Calu3 (cell line): ENCODE measurements at regions of chr14 and their contacts with region 1.

Region 1: GRCh38 chr14:52414779-52415178 is 100.7 kb downstream of the PTGER2 start:
- DNase-seq: no peak
- H3K4me3 Mint-ChIP-seq: no peak overlapping the region
- H3K27ac Mint-ChIP-seq: no peak overlapping the region
- H3K4me1 Mint-ChIP-seq: no peaks in the 10 kb centered on the region
- H3K27me3 Mint-ChIP-seq: no peaks in the 10 kb centered on the region
- CTCF ChIP-seq: no peak

Region 2: DNA sequence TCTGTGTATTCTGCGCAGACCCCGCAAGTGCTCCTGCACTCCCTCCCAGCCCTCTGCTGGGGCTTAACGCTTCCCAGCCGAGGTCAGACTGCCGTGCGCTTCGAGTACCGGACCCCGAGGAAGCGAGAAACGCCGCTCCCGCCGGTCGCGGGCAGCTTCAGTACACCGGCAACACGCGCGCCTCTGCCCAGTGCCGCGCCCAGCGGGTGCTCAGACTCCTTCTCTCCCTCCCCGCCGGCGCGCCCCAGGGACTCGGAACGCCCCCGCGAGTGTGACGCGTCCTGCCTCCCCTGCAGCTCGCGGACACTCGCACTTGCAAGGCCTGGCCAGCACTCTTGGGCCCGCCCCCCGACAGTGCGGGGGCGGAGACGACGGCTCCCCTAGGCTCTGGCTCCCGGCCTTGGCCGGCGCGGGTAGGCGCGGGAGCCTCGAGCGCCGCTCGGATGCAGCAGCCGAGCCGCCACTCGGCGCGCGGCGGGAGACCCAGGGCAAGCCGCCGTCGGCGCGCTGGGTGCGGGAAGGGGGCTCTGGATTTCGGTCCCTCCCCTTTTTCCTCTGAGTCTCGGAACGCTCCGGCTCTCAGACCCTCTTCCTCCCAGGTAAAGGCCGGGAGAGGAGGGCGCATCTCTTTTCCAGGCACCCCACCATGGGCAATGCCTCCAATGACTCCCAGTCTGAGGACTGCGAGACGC is 100.7 kb before region 1 on chr14 and contains the start of gene PTGER2:
- CTCF ChIA-PET with region 1: no interaction called
- intact Hi-C with region 1: no loop called
- DNase-seq: peak; percentile 74
- H3K4me3 Mint-ChIP-seq: peak within 1 kb of the TSS; percentile 72
- H3K27ac Mint-ChIP-seq: no peak within 1 kb of the TSS
- H3K4me1 Mint-ChIP-seq: peaks cover 12% of the 10 kb centered on the region
- H3K27me3 Mint-ChIP-seq: peaks cover 74% of the 10 kb centered on the region
- CTCF ChIP-seq: no peak
- total RNA-seq, gene PTGER2: 0.29 TPM in 1 of 2 replicates, not detected in the other

Region 3: DNA sequence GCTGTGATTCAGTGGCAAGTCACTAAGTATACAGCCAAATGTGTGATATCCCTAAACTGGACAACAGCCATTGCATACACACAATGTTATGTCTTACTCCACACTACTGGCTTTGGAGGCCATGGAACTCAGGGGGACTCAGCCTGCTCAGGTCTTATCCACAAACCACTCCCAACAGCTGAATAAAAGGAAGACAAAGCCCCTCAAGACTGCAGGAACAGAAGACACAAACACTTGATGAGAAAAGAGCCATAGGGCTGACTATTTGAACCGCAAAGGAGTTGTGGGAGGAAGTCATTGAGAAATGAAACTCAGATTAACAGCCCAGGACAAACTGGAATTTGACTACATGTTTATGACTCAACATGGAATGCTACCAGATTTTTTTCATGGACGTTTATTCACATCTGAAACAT is 59.8 kb before region 1 on chr14:
- CTCF ChIA-PET with region 1: no interaction called
- intact Hi-C with region 1: no loop called
- DNase-seq: no peak
- H3K4me3 Mint-ChIP-seq: peak overlapping the region; percentile 7
- H3K27ac Mint-ChIP-seq: peak overlapping the region; percentile 16
- H3K4me1 Mint-ChIP-seq: peaks cover 30% of the 10 kb centered on the region
- H3K27me3 Mint-ChIP-seq: no peaks in the 10 kb centered on the region
- CTCF ChIP-seq: no peak

Region 4: GRCh38 chr14:52380294-52380693 is 34.5 kb before region 1 on chr14:
- CTCF ChIA-PET with region 1: no interaction called
- intact Hi-C with region 1: no loop called
- DNase-seq: no peak
- H3K4me3 Mint-ChIP-seq: no peak overlapping the region
- H3K27ac Mint-ChIP-seq: no peak overlapping the region
- H3K4me1 Mint-ChIP-seq: no peaks in the 10 kb centered on the region
- H3K27me3 Mint-ChIP-seq: peaks cover 15% of the 10 kb centered on the region
- CTCF ChIP-seq: no peak

Region 5: DNA sequence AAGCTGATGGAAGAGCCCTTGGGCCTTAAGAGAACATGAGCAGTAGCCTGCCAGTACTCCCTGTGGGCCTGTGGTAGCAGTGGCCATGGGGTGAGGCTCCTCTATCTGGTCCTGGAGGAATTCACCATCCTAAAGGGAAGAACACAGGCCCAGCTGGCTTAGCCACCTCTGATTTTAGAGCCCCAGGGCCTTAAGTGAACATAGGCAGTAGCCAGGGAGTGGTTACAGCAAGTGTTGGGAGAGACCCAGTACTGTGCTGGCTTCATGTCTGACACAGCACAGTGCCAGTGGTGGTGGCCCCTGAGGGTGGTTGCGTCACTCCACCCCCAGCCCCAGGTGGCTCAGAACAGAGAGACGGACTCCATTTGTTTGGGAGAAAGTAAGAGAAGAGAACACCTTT is 32.4 kb after region 1 on chr14:
- CTCF ChIA-PET with region 1: interaction called, 10 read pairs
- intact Hi-C with region 1: no loop called
- DNase-seq: no peak
- H3K4me3 Mint-ChIP-seq: no peak overlapping the region
- H3K27ac Mint-ChIP-seq: no peak overlapping the region
- H3K4me1 Mint-ChIP-seq: no peaks in the 10 kb centered on the region
- H3K27me3 Mint-ChIP-seq: no peaks in the 10 kb centered on the region
- CTCF ChIP-seq: no peak

Region 6: GRCh38 chr14:52494444-52494843 is 79.7 kb after region 1 on chr14:
- CTCF ChIA-PET with region 1: no interaction called
- intact Hi-C with region 1: no loop called
- DNase-seq: no peak
- H3K4me3 Mint-ChIP-seq: no peak overlapping the region
- H3K27ac Mint-ChIP-seq: no peak overlapping the region
- H3K4me1 Mint-ChIP-seq: no peaks in the 10 kb centered on the region
- H3K27me3 Mint-ChIP-seq: no peaks in the 10 kb centered on the region
- CTCF ChIP-seq: no peak